Activated T-helper 2 cell treated with anti-CD3 and anti-CD28 coated beads, Interferon-gamma antibody, Interleukin-2, Interleukin-4, amounts not matched to agents 10 μg/mL and 5 μg/mL and 100 μg/mL, durations not matched to agents 14 hours and 24 hours and 36 hours (primary cell): ENCODE measurements at regions of chr3 and their contacts with region 1.

Region 1: GRCh38 chr3:172595641-172596393 is 72.6 kb upstream of the TNFSF10 start:
- DNase-seq: peak; percentile 31
- H3K4me3 Mint-ChIP-seq: peak overlapping the region; percentile 77
- H3K27ac Mint-ChIP-seq: peak overlapping the region; percentile 66
- H3K4me1 Mint-ChIP-seq: peaks cover 54% of the 10 kb centered on the region
- H3K27me3 Mint-ChIP-seq: peaks cover 2% of the 10 kb centered on the region

Region 2: DNA sequence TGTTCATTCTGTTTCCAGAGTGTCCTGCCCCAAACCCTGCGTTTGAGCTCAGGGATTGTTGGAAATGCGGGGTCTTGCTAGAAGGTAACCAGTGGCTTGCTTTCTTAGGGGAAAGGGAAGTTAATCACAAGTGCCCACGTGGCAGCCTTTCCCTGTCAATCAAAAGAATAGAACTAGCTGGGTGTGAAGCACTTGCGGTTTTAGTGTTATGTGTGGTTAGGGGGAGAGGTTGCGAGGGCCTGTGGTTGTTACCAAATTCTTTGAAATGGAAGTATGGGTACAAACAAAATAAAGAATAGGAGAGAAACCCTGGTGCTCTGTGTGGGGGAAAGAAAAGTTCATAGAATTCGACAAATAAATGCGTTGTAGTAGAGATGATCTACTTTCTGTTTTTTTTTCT is 488.8 kb before region 1 on chr3:
- intact Hi-C with region 1: loop called (anchors 5 kb)
- DNase-seq: peak; percentile 71
- H3K4me3 Mint-ChIP-seq: peak overlapping the region; percentile 75
- H3K27ac Mint-ChIP-seq: peak overlapping the region; percentile 90
- H3K4me1 Mint-ChIP-seq: peaks cover 64% of the 10 kb centered on the region
- H3K27me3 Mint-ChIP-seq: no peaks in the 10 kb centered on the region

Region 3: GRCh38 chr3:172332256-172333041 is 263.4 kb before region 1 on chr3:
- intact Hi-C with region 1: loop called (anchors 5 kb)
- DNase-seq: peak; percentile 22
- H3K4me3 Mint-ChIP-seq: no peak overlapping the region
- H3K27ac Mint-ChIP-seq: no peak overlapping the region
- H3K4me1 Mint-ChIP-seq: peaks cover 10% of the 10 kb centered on the region
- H3K27me3 Mint-ChIP-seq: no peaks in the 10 kb centered on the region

Region 4: GRCh38 chr3:172530566-172530965 is 65.3 kb before region 1 on chr3:
- intact Hi-C with region 1: loop called (anchors 1 kb)
- DNase-seq: peak; percentile 50
- H3K4me3 Mint-ChIP-seq: peak overlapping the region; percentile 22
- H3K27ac Mint-ChIP-seq: peak overlapping the region; percentile 78
- H3K4me1 Mint-ChIP-seq: peaks cover 46% of the 10 kb centered on the region
- H3K27me3 Mint-ChIP-seq: no peaks in the 10 kb centered on the region

Region 5: DNA sequence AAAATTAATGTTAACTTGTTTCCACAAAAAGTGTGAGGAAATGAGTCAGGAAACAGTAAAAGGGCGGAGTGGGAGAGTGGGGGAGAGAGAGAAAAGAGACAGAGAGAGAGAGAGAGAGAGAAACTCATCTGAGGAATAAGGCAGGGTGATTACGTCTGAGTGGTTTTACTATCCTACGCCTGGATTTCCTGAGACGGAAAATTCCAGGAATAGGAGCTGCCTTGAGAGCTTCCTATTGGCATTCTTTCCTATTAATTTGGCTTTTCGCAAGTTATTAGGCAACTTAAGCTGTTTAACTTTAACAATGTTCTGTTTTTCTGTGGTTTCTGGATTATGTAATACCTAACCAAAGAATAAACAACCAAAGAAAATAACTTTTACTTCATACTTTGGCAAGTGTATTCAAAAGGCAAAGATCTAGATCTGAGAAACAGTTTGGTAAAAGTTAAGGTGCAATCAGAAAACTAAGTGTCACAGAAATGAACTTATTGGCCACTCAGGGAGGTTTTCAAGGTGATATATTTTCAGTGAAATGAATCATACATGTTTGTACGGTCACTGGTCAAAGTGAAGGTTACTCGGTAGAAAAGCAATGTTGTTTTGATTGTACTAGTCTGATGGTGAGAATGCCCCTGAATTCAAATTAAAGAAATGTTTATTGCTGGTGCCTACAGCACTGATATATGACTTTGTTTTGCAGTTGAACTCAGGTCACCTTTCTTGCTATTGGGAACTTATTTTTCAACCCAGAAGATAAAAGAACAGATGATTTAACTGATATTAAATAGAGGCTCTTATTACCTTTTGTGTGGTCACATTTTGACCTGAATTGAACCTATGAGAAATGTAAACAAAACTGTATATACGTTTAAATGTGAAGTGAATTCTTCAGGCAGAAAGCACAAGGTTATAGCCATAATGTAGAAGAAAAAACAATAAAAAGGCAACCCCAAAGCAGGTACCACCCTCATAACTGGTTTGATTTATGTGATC is 32.6 kb before region 1 on chr3:
- intact Hi-C with region 1: loop called (anchors 1 kb)
- DNase-seq: peak; percentile 32
- H3K4me3 Mint-ChIP-seq: peak overlapping the region; percentile 40
- H3K27ac Mint-ChIP-seq: peak overlapping the region; percentile 89
- H3K4me1 Mint-ChIP-seq: peaks cover 47% of the 10 kb centered on the region
- H3K27me3 Mint-ChIP-seq: no peaks in the 10 kb centered on the region

Region 6: DNA sequence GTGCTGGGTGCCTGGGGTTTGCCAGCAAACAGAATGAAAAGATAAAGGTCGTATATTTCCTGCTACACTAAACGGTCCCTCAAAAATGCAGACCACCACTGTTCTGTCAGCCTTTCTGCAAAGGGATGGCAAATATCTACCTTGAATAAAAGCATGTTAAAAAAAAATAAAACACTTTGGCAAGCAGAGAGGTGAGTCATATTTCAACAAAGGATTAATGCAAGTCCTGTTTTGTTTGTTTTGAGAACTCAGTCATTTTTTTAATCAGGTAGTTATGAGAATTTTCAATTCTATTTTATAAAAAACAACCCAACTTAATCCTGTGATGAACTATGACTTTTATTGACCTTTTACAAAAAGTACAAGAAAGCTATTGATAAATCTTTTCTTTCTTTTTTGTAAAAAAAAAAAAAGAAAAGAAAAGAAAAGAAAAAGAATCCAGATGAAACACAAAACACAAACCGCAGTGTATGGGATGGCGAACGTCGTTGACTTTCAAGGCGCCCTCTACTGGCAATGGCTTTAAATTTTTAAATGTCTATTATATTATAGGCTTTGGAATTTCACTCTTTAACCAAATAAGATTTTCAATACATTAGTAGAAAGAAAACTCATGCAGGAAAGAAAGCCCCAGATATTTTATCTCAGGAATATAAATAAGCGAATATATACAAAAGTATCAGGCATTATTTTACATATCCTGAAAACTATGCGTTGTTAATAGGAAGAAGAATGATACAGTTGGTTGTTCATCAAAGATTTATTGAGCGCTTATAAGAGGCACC is 27.3 kb after region 1 on chr3:
- intact Hi-C with region 1: loop called (anchors 2 kb)
- DNase-seq: no peak
- H3K4me3 Mint-ChIP-seq: no peak overlapping the region
- H3K27ac Mint-ChIP-seq: no peak overlapping the region
- H3K4me1 Mint-ChIP-seq: peaks cover 9% of the 10 kb centered on the region
- H3K27me3 Mint-ChIP-seq: no peaks in the 10 kb centered on the region

Region 7: DNA sequence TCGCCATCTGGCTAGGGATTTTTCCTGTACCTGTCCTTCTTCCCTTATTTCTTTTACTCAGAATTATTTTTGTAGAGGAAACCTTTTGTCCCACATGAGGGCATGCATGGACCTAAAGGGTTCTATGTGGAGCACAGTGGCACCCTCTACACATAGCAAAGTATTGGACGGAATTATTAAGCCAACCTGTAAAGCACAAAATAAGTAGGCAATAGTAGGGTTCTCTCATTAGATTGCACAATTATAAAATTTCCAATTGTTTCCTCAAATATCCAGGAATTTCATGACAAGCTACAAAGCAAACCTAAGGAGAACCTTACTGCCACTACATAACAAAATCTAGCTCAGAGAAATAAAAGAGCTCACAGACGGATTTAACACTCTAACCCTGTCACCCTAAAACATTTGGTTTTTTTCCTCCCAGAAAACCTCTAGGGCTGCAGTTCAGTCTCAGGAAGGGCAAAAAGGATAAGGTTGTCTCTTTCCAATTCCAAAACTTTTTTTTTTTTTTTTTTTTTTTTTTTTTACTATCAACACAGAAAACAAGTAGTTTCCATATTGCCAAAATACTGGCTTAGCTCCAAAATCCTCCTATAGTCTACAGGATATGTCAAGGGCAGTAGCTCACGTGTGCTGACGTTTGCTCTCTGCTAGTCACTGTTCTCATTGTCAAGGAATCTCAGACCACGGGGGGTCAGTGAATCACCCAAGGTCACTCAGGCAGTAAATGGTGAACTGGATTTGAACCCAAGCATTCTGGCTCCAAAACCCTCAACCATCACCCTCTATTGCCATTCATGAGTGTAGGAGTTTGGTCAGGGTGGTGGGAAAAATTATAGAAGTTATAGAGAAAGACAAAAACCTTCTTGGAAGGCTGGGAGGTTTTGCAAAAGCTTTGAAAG is 62.8 kb after region 1 on chr3:
- intact Hi-C with region 1: no loop called
- DNase-seq: no peak
- H3K4me3 Mint-ChIP-seq: no peak overlapping the region
- H3K27ac Mint-ChIP-seq: no peak overlapping the region
- H3K4me1 Mint-ChIP-seq: peaks cover 2% of the 10 kb centered on the region
- H3K27me3 Mint-ChIP-seq: peaks cover 15% of the 10 kb centered on the region

Region 8: GRCh38 chr3:172750368-172751174 is 154.8 kb after region 1 on chr3 and contains the start of gene ECT2:
- intact Hi-C with region 1: loop called (anchors 5 kb)
- DNase-seq: peak; percentile 98
- H3K4me3 Mint-ChIP-seq: peak within 1 kb of the TSS; percentile 97
- H3K27ac Mint-ChIP-seq: peak within 1 kb of the TSS; percentile 95
- H3K4me1 Mint-ChIP-seq: peaks cover 31% of the 10 kb centered on the region
- H3K27me3 Mint-ChIP-seq: peaks cover 10% of the 10 kb centered on the region
- total RNA-seq, gene ECT2: 39.5 and 40.3 TPM in 2 replicates